ENCODE measurements at regions of chr19 and their contacts with region 1.

Region 1: GRCh38 chr19:40716655-40717324 is at the starts of genes COQ8B and ITPKC:
- DNase-seq: peak; percentile 100
- ATAC-seq: peak; percentile 71 to 85 (median 82)
- H3K4me3 ChIP-seq: peak within 1 kb of the TSS; percentile 65 to 98 (median 82)
- H3K27ac ChIP-seq: peak within 1 kb of the TSS; percentile 95 to 99 (median 97)
- H3K4me1 ChIP-seq: peaks cover 5 to 78% (median 53%) of the 10 kb centered on the region in 12 donors
- H3K27me3 ChIP-seq: no peaks in the 10 kb centered on the region
- CTCF ChIP-seq: peak in 6 of 12 donors; percentile 13 to 38 (median 24)
- POLR2A ChIP-seq: peak; percentile 53 to 74
- total RNA-seq, gene COQ8B: 18.2 to 49.7 (median 27.8) TPM
- total RNA-seq, gene ITPKC: 6.9 to 27.3 (median 8.9) TPM

Region 2: GRCh38 chr19:40690693-40691420 is 25.9 kb before region 1 on chr19:
- intact Hi-C with region 1: loop called in 4 of 10 experiments (anchors 1 to 2 kb)
- DNase-seq: peak; percentile 96 to 97 (median 96)
- ATAC-seq: peak; percentile 86 to 91 (median 90)
- H3K4me3 ChIP-seq: peak overlapping the region; percentile 58 to 93 (median 72)
- H3K27ac ChIP-seq: peak overlapping the region; percentile 82 to 94 (median 86)
- H3K4me1 ChIP-seq: peaks cover 0 to 43% (median 20%) of the 10 kb centered on the region in 12 donors
- H3K27me3 ChIP-seq: no peaks in the 10 kb centered on the region
- CTCF ChIP-seq: no peak
- POLR2A ChIP-seq: peak in 1 of 2 donors; percentile 40

Region 3: DNA sequence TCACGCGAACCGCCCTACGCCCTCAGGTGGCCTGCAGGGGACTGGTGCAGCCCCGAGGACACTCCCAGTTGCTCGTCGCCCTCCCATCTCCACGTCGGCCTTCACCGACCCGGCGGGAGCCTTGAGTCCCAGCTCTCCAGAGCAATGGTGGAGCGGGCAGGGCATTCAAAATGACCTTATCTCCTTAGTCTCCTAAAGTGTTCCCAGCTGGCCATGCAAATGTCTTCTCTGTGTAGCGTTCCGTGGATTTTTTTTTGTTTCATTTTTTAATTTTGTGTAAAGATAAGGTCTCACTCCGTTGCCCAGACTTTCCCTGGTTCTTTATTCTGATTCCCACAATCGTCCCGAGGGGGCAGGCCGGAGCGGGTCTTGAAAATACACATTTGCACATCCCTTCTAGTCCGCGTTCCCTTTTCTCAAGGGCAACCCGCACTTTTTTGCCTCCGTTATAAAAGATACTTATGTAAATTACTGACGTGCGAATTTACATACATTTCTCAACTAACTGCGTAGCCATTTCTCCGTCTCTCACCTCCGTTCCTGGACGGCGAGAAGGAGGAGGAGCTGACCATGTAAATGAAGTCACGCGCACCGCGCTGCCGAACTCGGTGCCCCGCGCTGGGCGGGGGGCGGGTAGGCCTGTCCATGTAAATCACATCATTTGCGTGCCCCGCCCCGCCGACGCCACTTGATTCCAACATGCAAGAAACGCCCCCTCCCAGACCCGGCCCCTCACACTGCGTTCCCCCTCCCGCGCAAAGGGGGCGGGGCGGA is 81.6 kb after region 1 on chr19:
- intact Hi-C with region 1: loop called in 2 of 10 experiments (anchors 2 kb)
- DNase-seq: peak; percentile 100
- ATAC-seq: peak; percentile 84 to 90 (median 88)
- H3K4me3 ChIP-seq: peak overlapping the region in 11 of 12 donors; percentile 44 to 99 (median 94)
- H3K27ac ChIP-seq: peak overlapping the region; percentile 75 to 99 (median 96)
- H3K4me1 ChIP-seq: peaks cover 30 to 45% (median 37%) of the 10 kb centered on the region in 12 donors
- H3K27me3 ChIP-seq: no peaks in the 10 kb centered on the region
- CTCF ChIP-seq: peak in 9 of 12 donors; percentile 21 to 62 (median 52)
- POLR2A ChIP-seq: peak in 1 of 2 donors; percentile 55

Region 4: DNA sequence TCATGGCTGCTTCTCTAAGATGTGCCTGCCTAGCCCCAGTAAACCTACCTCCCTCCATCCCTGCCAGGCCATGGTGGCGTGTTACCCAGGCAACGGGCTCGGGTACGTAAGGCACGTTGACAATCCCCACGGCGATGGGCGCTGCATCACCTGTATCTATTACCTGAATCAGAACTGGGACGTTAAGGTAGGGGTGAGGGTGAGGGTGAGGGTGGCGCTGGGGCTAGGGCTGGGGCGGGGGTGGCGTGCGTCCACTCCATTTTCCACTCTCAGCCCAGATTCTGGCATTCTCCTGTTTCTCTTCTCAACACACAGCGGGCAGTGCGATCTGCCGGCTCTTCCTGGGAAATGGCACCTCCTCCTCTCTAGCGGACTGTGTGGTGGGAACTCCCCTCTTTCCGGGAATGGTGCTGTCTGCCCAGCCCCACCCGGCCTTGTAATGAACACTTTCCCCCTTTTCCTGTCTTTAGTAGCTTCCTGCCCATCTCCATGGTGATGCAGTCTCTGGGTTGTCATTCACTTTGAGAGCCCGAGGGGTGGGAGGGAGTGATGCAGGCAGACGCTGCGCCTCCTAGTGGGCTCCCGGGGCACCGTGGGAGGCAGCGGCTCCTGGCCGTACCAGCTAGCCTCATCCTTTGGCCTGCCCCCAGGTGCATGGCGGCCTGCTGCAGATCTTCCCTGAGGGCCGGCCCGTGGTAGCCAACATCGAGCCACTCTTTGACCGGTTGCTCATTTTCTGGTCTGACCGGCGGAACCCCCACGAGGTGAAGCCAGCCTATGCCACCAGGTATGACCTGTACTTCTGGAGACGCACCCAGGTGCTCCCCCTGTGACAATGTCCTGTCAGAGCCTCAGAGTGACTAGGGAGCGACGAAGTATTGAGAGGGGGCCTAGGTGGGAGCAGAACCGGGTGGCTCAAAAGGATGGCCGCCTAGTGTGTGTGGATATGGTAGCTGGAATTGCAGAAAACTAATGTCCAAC is 90.0 kb after region 1 on chr19:
- intact Hi-C with region 1: loop called in 2 of 10 experiments (anchors 5 kb)
- DNase-seq: peak; percentile 84 to 90 (median 87)
- ATAC-seq: peak; percentile 38 to 64 (median 48)
- H3K4me3 ChIP-seq: peak overlapping the region in 9 of 12 donors; percentile 1 to 38 (median 20)
- H3K27ac ChIP-seq: peak overlapping the region; percentile 13 to 99 (median 97)
- H3K4me1 ChIP-seq: peaks cover 42 to 96% (median 82%) of the 10 kb centered on the region in 12 donors
- H3K27me3 ChIP-seq: no peaks in the 10 kb centered on the region
- CTCF ChIP-seq: peak; percentile 75 to 95 (median 86)
- POLR2A ChIP-seq: peak in 1 of 2 donors; percentile 33

Region 5: DNA sequence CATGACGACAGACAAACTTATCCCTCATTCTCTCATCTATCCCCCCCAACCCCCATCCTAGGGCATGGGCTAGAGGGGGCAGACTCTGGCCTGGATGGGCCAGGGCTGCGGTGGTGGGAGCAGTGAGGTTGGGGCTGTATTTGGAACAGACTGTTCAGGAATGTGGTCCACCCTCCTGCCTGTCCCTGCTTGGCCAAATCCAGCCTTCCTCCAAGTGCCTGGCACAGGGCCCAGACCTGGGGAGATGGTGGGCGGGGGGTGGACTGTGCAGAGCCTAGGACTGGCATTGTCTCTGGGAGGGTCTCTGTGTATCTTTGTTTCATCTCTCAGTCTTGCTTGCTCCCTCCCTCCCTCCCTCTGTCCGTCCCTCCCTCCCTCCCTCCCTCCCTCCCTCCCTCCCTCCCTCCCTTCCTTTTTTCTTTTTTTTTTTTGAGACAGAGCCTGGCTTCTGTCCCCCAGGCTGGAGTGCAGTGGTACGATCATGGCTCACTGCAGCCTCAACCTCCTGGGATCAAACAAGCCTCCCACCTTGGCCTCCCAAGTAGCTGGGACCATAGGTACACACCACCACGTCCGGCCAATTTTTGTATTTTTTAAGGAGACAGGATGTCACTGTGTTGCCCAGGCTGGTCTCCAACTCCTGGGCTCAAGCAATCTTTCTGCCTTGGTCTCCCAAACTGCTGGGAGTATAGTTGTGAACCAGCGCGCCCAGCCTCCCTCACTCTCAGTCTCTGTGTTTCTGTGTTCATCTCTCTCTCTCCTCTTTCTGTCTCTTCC is 96.6 kb after region 1 on chr19:
- intact Hi-C with region 1: loop called in 3 of 10 experiments (anchors 5 kb)
- DNase-seq: no peak
- ATAC-seq: no peak
- H3K4me3 ChIP-seq: no peak overlapping the region
- H3K27ac ChIP-seq: no peak overlapping the region
- H3K4me1 ChIP-seq: peaks cover 4 to 46% (median 31%) of the 10 kb centered on the region in 12 donors
- H3K27me3 ChIP-seq: no peaks in the 10 kb centered on the region
- CTCF ChIP-seq: no peak
- POLR2A ChIP-seq: no peak

Region 6: GRCh38 chr19:40995355-40995754 is 278.6 kb after region 1 on chr19:
- intact Hi-C with region 1: no loop called
- DNase-seq: no peak
- ATAC-seq: no peak
- H3K4me3 ChIP-seq: no peak overlapping the region
- H3K27ac ChIP-seq: no peak overlapping the region
- H3K4me1 ChIP-seq: no peaks in the 10 kb centered on the region
- H3K27me3 ChIP-seq: no peaks in the 10 kb centered on the region
- CTCF ChIP-seq: no peak
- POLR2A ChIP-seq: no peak